Activated T-helper 1 cell treated with anti-CD3 and anti-CD28 coated beads, Interleukin-12 subunit alpha, Interleukin-12 subunit beta, Interleukin-2, Interleukin-4 antibody, amounts not matched to agents 30 ng/mL and 10 ng/mL and 1 ng/mL, durations not matched to agents 14 hours and 24 hours and 36 hours (primary cell): ENCODE measurements at regions of chr1 and their contacts with region 1.

Region 1: DNA sequence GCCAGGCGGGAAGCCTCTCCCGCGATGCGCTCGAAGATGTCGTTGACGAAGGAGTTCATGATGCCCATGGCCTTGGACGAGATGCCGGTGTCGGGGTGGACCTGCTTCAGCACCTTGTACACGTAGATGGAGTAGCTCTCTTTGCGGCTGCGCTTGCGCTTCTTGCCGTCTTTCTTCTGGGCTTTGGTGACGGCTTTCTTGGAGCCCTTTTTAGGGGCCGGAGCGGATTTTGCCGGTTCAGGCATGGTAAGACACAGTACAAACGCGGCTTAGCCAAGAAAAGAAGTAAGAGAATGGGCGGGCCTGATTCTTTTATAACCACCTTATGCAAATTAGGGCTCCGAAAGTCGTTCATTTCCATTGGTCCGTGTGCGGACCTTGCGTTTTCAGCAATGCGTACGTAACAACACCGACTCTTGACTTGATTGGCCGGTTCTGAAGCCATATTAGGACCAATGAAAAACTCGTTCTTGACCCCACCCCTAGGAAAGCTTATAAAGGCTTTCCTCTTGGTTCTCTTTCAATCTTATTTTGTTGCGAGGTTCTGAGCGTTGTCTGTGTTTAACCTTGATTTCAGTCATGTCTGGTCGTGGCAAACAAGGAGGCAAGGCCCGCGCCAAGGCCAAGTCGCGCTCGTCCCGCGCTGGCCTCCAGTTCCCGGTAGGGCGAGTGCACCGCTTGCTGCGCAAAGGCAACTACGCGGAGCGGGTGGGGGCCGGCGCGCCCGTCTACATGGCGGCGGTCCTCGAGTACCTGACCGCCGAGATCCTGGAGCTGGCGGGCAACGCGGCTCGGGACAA is 12.8 kb upstream of the BOLA1 start:
- DNase-seq: peak; percentile 90
- H3K4me3 Mint-ChIP-seq: no peak overlapping the region
- H3K27ac Mint-ChIP-seq: no peak overlapping the region
- H3K4me1 Mint-ChIP-seq: peaks cover 13% of the 10 kb centered on the region
- H3K27me3 Mint-ChIP-seq: no peaks in the 10 kb centered on the region

Region 2: GRCh38 chr1:149997585-149998262 is 111.1 kb after region 1 on chr1:
- intact Hi-C with region 1: no loop called
- DNase-seq: no peak
- H3K4me3 Mint-ChIP-seq: peak overlapping the region; percentile 6
- H3K27ac Mint-ChIP-seq: peak overlapping the region; percentile 65
- H3K4me1 Mint-ChIP-seq: peaks cover 52% of the 10 kb centered on the region
- H3K27me3 Mint-ChIP-seq: peaks cover 2% of the 10 kb centered on the region

Region 3: DNA sequence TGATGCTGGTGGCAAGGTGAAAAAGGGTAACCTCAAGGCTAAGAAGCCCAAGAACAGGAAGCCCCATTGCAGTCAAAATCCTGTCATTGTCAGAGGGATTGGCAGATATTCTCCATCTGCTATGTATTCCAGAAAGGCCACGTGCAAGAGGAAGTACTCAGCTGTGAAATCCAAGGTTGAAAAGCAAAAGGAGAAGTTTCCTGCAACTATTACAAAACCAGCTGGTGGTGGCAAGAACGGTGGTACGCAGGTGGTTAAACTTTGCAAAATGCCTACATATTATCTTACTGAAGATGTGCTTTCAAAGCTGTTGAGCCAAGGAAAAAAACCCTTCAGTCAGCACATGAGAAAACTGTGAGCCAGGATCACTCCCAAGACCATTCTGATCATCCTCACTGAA is 167.3 kb after region 1 on chr1:
- intact Hi-C with region 1: loop called (anchors 2 kb)
- DNase-seq: no peak
- H3K4me3 Mint-ChIP-seq: no peak overlapping the region
- H3K27ac Mint-ChIP-seq: no peak overlapping the region
- H3K4me1 Mint-ChIP-seq: peaks cover 12% of the 10 kb centered on the region
- H3K27me3 Mint-ChIP-seq: peaks cover 14% of the 10 kb centered on the region

Region 4: DNA sequence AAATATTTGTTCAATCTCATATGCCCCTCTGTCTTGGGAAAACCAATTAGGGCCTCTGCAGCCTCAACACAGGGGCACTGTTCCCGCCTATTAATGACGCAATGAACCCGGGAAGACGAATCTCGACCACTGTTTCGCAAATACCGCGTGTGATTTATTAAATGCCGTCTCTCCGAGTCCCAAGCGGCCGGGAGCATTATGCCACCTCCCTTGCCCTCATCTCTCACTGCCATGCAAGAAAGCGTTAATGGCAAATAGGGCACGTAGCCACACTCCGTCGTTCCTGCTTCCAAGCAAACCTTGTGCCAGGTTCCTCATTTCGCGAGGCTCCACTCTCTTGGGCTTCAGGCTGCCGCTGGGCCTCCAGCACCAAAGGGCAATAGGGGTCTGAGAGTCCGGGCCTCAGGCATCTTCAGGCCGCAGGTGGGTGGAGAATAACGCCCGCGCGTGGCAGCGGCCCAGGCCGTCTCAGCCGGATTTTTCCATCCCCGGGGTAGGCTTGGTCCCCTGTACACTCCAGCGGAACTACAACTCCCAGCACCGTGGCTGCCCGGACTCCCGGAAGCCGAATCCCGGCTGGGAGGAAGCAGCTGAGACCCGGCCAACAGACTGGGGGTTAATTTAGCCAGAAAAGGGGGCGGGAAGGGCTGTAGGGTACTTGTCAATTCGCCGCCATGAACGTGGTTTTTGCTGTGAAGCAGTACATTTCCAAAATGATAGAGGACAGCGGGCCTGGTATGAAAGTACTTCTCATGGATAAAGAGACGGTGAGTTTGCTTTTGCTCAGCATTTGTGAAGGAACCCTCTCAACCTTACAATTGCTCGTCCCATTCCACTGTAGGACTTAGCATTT is 180.8 kb after region 1 on chr1 and contains the start of gene VPS45:
- intact Hi-C with region 1: loop called (anchors 1 kb)
- DNase-seq: peak; percentile 83
- H3K4me3 Mint-ChIP-seq: peak within 1 kb of the TSS; percentile 97
- H3K27ac Mint-ChIP-seq: peak within 1 kb of the TSS; percentile 98
- H3K4me1 Mint-ChIP-seq: peaks cover 45% of the 10 kb centered on the region
- H3K27me3 Mint-ChIP-seq: peaks cover 5% of the 10 kb centered on the region
- total RNA-seq, gene VPS45: 25.9 and 30.2 TPM in 2 replicates

Region 5: GRCh38 chr1:150895601-150896000 is 1009.0 kb after region 1 on chr1:
- intact Hi-C with region 1: no loop called
- DNase-seq: no peak
- H3K4me3 Mint-ChIP-seq: no peak overlapping the region
- H3K27ac Mint-ChIP-seq: no peak overlapping the region
- H3K4me1 Mint-ChIP-seq: peaks cover 4% of the 10 kb centered on the region
- H3K27me3 Mint-ChIP-seq: peaks cover 4% of the 10 kb centered on the region